ENCODE measurements at regions of chr7 and their contacts with region 1.

Region 1: DNA sequence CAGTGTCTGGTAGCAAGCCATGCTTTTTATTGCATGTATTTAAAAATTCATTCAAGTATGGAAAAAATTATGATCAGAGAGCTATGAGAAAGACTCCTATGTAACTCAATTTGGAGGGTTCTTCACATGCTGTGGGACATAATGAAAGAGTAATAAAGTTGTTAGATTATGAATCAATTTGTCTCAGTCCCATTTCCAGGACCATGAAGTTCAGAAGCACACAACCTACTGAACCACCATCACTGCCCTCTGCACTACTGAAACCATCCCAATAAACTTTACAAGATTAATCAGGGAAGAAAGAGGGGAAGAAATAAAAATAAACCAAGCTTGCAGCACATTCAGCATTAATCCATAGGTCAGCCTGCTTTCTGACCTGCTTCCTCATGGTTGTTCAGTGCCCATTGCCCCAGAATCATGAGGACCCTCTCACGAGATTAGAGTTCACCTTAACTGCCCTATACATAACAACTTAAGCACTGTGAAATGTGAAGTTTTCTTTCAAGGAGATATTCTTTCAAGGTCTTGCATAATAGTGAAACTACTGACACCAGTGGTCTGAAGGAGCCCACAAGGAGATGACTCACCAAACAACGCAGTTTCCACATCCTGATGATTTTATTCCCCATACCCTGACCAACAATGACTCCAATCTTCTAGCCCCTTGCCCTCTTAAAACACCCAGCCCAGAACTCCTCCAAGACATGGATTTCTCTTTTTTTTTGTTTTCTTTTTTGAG is 171.5 kb upstream of the ADCY1 start:
- DNase-seq: no peak
- H3K4me3 ChIP-seq: no peak overlapping the region
- H3K27ac ChIP-seq: no peak overlapping the region
- H3K4me1 ChIP-seq: no peaks in the 10 kb centered on the region
- H3K27me3 ChIP-seq: no peaks in the 10 kb centered on the region
- CTCF ChIP-seq: no peak
- EP300 ChIP-seq: no peak
- POLR2A ChIP-seq: no peak

Region 2: DNA sequence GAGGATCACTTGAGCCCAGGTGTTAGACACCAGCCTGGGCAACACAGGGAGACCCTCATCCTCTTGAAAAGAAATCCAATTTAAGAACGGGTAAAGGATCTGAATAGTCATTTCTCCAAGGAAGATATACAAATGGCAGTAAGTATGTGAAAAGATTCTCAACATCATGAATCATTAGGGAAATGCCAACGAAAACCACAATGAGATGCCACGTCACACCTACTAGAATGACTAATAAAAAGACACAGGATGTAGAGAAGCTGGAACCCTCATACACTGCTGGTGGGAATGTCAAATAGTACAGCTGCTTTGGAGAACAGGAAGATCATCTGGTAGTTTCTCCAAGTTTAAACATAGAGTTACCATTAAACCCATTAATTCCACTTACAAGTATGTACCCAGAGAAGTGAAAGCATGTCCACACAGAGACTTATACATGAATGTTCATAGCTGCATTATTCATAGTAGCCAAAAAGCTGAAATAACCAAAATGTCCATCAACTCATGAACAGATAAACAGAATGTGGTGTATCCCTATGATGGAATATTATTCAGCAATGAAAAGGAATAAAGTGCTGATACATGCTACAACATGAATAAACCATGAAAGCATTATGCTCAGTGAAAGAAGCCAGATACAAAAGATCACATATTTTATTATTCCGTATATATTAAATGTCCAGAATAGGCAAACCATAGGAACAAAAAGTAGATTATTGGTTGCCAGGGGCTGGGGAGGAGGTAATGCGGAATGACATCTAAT is 667.1 kb before region 1 on chr7:
- in situ Hi-C with region 1: no loop called
- intact Hi-C with region 1: no loop called
- DNase-seq: no peak
- H3K4me3 ChIP-seq: no peak overlapping the region
- H3K27ac ChIP-seq: no peak overlapping the region
- H3K4me1 ChIP-seq: no peaks in the 10 kb centered on the region
- H3K27me3 ChIP-seq: no peaks in the 10 kb centered on the region
- CTCF ChIP-seq: no peak
- EP300 ChIP-seq: no peak
- POLR2A ChIP-seq: no peak

Region 3: DNA sequence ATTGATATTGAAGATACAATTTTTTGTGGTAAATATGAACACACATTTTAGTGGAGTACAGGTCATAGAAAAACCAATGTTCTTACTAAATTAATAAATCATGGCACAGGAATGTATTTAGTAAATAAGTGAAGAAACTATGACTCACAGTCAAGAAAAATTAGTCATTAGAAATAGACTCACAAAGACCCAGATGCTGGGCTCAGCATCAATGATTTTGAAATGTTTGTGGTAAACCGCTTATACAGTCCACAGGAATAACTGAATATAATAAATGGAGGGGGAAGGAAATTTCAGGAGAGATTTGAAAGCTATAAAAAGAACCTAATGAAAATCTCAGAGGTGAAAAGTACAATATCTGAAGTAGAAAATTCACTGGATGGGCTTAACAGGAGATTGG is 33.2 kb after region 1 on chr7:
- in situ Hi-C with region 1: no loop called
- intact Hi-C with region 1: loop called (anchors 1 kb)
- DNase-seq: no peak
- H3K4me3 ChIP-seq: no peak overlapping the region
- H3K27ac ChIP-seq: no peak overlapping the region
- H3K4me1 ChIP-seq: no peaks in the 10 kb centered on the region
- H3K27me3 ChIP-seq: no peaks in the 10 kb centered on the region
- CTCF ChIP-seq: no peak
- EP300 ChIP-seq: no peak
- POLR2A ChIP-seq: no peak

Measured in transverse colon (tissue), 4 donors.